ENCODE measurements at regions of chr11 and their contacts with region 1.

Region 1: DNA sequence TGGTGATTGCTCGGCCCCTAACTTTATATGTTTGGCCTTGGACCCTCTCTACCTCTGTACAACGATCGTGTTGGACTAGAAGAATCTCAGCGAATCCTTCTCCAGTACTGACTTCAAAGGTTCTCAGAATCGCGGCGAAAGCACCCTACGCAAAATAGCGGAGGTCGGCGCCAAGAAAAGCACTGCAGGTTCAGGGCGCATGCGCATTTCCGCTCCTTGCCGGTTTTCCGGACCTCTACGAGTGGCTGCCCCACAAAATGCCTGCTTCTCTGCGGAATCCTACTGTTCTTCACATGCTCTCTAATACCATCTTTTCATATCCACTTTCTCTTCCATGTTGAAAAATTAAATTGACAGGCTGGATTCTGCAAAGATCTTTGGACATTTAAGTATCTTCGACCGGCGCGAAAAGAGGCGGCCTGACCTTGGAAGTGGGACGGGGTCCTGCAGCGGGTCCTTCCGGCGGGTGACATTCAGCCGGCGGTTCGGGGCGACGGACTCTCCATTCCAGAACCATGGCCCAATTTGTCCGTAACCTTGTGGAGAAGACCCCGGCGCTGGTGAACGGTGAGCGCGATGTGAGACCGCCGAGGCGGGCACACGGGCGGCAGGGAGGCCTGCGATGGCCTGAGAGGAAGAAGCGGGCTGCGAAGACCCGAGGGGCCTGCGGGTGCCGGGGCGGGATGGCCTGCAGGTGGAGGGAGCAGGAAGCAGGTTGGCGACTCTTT is at the start of gene ATP5MG:
- DNase-seq: peak; percentile 97
- ATAC-seq: peak; percentile 87
- H3K4me3 ChIP-seq: peak within 1 kb of the TSS; percentile 62 to 97
- H3K27ac ChIP-seq: peak within 1 kb of the TSS; percentile 97
- H3K4me1 ChIP-seq: peaks cover 33% of the 10 kb centered on the region
- H3K27me3 ChIP-seq: no peaks in the 10 kb centered on the region
- CTCF ChIP-seq: no peak
- total RNA-seq, gene ATP5MG: 504 TPM

Region 2: DNA sequence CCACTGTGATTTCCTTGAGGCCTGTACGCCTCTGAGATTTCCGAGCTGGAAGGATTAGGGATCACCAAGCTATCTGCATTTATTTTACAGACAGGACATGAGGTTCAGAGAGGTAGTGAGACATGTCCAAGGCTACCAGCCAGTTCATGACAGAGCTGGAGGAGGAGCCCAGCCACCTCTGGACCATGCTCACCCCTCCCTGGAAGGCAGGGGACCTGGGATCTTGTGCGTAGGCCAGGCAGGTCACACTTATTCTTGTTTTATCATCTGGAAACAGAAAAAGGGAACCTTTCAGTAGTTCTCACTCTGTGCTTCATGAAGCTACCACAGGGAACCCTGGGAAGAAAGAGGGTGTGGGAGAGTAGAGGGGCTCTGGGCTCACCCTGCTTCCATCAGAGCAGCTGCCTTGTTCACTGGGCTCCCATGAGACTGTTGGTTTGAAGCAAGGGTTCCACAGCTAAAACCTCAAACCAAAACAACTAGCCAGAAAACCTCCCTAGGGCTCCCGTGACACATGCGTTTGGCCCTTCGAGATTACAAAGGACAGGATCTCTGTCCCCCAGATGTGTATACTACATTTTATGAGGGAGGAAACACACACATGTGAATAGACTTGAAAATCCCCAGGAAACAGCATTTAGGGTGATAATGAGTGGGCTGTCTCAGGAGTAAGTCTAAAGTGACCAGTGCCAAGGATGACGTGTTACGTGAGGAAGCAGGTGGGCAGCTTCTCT is 710.7 kb before region 1 on chr11:
- CTCF ChIA-PET with region 1: no interaction called
- POLR2A ChIA-PET with region 1: no interaction called
- in situ Hi-C with region 1: no loop called
- intact Hi-C with region 1: no loop called
- DNase-seq: no peak
- ATAC-seq: no peak
- H3K4me3 ChIP-seq: no peak overlapping the region
- H3K27ac ChIP-seq: no peak overlapping the region
- H3K4me1 ChIP-seq: no peaks in the 10 kb centered on the region
- H3K27me3 ChIP-seq: peaks cover 14% of the 10 kb centered on the region
- CTCF ChIP-seq: no peak

Region 3: DNA sequence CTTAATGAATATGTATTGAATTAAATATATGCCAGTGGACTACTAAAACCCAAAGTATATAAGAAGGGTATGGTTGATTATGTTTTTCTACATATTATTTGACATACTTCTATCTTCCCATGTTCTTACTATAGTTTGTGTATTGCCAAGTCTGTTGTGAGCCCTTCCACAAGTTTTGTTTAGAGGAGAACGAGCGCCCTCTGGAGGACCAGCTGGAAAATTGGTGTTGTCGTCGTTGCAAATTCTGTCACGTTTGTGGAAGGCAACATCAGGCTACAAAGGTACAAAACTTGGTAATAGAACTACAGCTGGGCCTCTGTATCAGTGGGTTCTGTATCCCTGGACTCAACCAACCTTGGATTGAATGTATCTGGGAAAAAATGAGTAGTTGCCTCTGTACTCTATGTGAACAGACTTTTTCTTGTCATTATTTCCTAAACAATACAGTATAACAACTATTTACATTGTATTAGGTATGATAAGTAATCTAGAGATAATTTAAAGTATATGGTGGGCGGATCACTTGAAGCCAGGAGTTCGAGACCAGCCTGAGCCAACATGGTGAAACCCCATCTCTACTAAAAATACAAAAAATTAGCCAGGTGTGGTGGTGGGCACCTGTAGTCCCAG is 87.3 kb after region 1 on chr11:
- CTCF ChIA-PET with region 1: no interaction called
- POLR2A ChIA-PET with region 1: no interaction called
- in situ Hi-C with region 1: no loop called
- intact Hi-C with region 1: loop called (anchors 1 kb)
- DNase-seq: peak; percentile 59
- ATAC-seq: peak; percentile 86
- H3K4me3 ChIP-seq: no peak overlapping the region
- H3K27ac ChIP-seq: no peak overlapping the region
- H3K4me1 ChIP-seq: no peaks in the 10 kb centered on the region
- H3K27me3 ChIP-seq: no peaks in the 10 kb centered on the region
- CTCF ChIP-seq: peak; percentile 93

Region 4: GRCh38 chr11:118633319-118633690 is 232.0 kb after region 1 on chr11:
- CTCF ChIA-PET with region 1: no interaction called
- POLR2A ChIA-PET with region 1: interaction called, 10 read pairs
- in situ Hi-C with region 1: no loop called
- intact Hi-C with region 1: no loop called
- DNase-seq: no peak
- ATAC-seq: no peak
- H3K4me3 ChIP-seq: no peak overlapping the region
- H3K27ac ChIP-seq: no peak overlapping the region
- H3K4me1 ChIP-seq: no peaks in the 10 kb centered on the region
- H3K27me3 ChIP-seq: no peaks in the 10 kb centered on the region
- CTCF ChIP-seq: no peak

Region 5: DNA sequence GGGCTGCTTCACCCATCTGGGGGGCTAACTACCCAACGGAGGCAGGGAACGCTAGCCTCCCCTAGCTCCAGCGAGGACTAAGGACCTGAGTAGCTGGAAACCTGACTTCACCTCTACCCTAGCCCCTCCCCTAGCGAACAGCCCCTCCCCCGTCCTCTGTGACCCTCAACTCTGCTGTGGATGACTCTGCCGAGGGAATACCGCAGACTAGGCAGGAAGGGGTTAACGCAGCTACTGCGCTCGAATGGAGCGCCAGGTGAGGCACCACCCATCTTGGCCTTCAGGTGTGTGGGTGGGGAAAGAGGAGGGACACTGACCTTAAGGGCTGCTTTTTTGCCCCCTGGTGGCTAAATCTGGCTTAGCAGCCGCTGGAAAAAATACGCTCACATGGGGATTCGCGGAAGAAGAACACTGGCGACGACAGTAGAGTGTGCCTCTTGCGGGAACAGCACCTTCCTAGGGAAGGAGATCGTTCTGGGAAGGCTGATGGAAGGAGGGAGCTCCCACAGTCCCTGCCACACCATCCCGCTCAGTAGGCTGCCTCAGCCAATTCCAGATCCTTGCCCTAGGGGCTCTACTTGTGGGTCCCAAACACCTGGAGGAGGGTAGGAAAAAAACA is 528.9 kb after region 1 on chr11:
- CTCF ChIA-PET with region 1: no interaction called
- POLR2A ChIA-PET with region 1: no interaction called
- in situ Hi-C with region 1: no loop called
- intact Hi-C with region 1: no loop called
- DNase-seq: peak; percentile 86
- ATAC-seq: peak; percentile 14
- H3K4me3 ChIP-seq: peak overlapping the region; percentile 68 to 72
- H3K27ac ChIP-seq: peak overlapping the region; percentile 97
- H3K4me1 ChIP-seq: peaks cover 25% of the 10 kb centered on the region
- H3K27me3 ChIP-seq: no peaks in the 10 kb centered on the region
- CTCF ChIP-seq: peak; percentile 98